Sigmoid colon (tissue), 7 donors: ENCODE measurements at regions of chr3 and their contacts with region 1.

Region 1: GRCh38 chr3:196711838-196712513 is at the starts of genes CEP19 and PIGX:
- DNase-seq: peak; percentile 90
- H3K4me3 ChIP-seq: peak within 1 kb of the TSS; percentile 62 to 81 (median 72)
- H3K27ac ChIP-seq: peak within 1 kb of the TSS; percentile 84 to 97 (median 94)
- H3K4me1 ChIP-seq: peaks cover 0 to 22% (median 17%) of the 10 kb centered on the region in 4 donors
- H3K27me3 ChIP-seq: no peaks in the 10 kb centered on the region
- CTCF ChIP-seq: no peak
- EP300 ChIP-seq: no peak
- POLR2A ChIP-seq: no peak
- total RNA-seq, gene CEP19: 1.6 to 2.6 (median 2.0) TPM
- total RNA-seq, gene PIGX: 20.9 to 41.0 (median 27.8) TPM

Region 2: GRCh38 chr3:196739671-196740480 is 27.9 kb after region 1 on chr3 and contains the start of gene PAK2:
- intact Hi-C with region 1: loop called (anchors 1 kb)
- DNase-seq: peak; percentile 94
- H3K4me3 ChIP-seq: peak within 1 kb of the TSS; percentile 74 to 90 (median 88)
- H3K27ac ChIP-seq: peak within 1 kb of the TSS; percentile 96 to 99 (median 96)
- H3K4me1 ChIP-seq: peaks cover 0 to 35% (median 23%) of the 10 kb centered on the region in 4 donors
- H3K27me3 ChIP-seq: no peaks in the 10 kb centered on the region
- CTCF ChIP-seq: no peak
- EP300 ChIP-seq: no peak
- POLR2A ChIP-seq: peak in 1 of 2 donors; percentile 45
- total RNA-seq, gene PAK2: 35.5 to 44.6 (median 37.7) TPM

Region 3: GRCh38 chr3:196803891-196804468 is 92.0 kb after region 1 on chr3:
- intact Hi-C with region 1: no loop called
- DNase-seq: no peak
- H3K4me3 ChIP-seq: no peak overlapping the region
- H3K27ac ChIP-seq: no peak overlapping the region
- H3K4me1 ChIP-seq: no peaks in the 10 kb centered on the region
- H3K27me3 ChIP-seq: no peaks in the 10 kb centered on the region
- CTCF ChIP-seq: no peak
- EP300 ChIP-seq: no peak
- POLR2A ChIP-seq: no peak

Region 4: GRCh38 chr3:196867507-196868296 is 155.7 kb after region 1 on chr3 and contains the start of gene SENP5:
- intact Hi-C with region 1: loop called (anchors 1 kb)
- DNase-seq: peak; percentile 94
- H3K4me3 ChIP-seq: peak within 1 kb of the TSS; percentile 83 to 100 (median 98)
- H3K27ac ChIP-seq: peak within 1 kb of the TSS; percentile 94 to 100 (median 96)
- H3K4me1 ChIP-seq: peaks cover 0 to 47% (median 28%) of the 10 kb centered on the region in 4 donors
- H3K27me3 ChIP-seq: no peaks in the 10 kb centered on the region
- CTCF ChIP-seq: no peak
- EP300 ChIP-seq: no peak
- POLR2A ChIP-seq: peak; percentile 73 to 79
- total RNA-seq, gene SENP5: 41.5 to 54.6 (median 45.8) TPM